ENCODE measurements at regions of chr12 and their contacts with region 1.

Region 1: DNA sequence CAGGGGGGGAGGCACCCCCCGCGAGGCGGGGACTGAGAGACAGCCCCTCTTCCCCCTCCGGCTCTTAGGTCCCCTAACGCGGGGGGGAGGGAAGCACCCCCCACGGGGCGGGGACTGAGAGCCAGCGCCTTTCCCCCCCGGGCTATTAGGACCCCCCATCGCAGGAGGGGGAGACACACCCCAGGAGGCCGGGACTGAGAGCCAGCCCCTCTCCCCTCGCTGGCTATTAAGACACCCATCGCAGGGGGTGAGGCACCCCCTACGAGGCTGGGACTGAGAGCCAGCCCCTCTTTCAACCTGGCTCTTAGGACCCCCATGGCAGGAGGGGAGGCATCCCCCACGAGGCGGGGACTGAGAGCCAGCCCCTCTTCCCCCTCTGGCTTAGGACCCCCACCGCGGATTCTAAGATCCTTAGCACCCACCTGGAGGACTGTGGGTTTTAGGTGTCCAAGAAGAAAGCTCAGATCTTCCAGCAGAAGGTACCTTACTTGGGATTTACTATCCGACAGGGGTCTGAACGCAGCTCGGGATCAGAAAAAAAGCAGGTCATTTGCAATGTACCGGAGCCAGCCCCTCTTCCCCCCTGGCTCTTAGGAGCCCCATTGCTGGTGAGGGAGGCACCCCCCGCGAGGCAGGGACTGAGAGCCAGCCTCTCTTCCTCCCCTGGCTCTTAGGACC is 197.8 kb upstream of the PZP start:
- DNase-seq: no peak
- H3K4me3 ChIP-seq: peak overlapping the region in 1 of 3 donors; percentile 59
- H3K27ac ChIP-seq: no peak overlapping the region
- H3K4me1 ChIP-seq: no peaks in the 10 kb centered on the region
- H3K27me3 ChIP-seq: no peaks in the 10 kb centered on the region
- CTCF ChIP-seq: no peak
- POLR2A ChIP-seq: no peak

Region 2: GRCh38 chr12:8145754-8146441 is 1260.1 kb before region 1 on chr12:
- intact Hi-C with region 1: loop called (anchors 10 kb)
- DNase-seq: no peak
- H3K4me3 ChIP-seq: peak overlapping the region in 2 of 3 donors; percentile 26 to 54
- H3K27ac ChIP-seq: peak overlapping the region in 1 of 2 donors; percentile 54
- H3K4me1 ChIP-seq: no peaks in the 10 kb centered on the region
- H3K27me3 ChIP-seq: no peaks in the 10 kb centered on the region
- CTCF ChIP-seq: no peak
- POLR2A ChIP-seq: no peak

Region 3: GRCh38 chr12:8890313-8891085 is 515.5 kb before region 1 on chr12:
- intact Hi-C with region 1: no loop called
- DNase-seq: no peak
- H3K4me3 ChIP-seq: peak overlapping the region; percentile 38 to 64 (median 52)
- H3K27ac ChIP-seq: no peak overlapping the region
- H3K4me1 ChIP-seq: no peaks in the 10 kb centered on the region
- H3K27me3 ChIP-seq: no peaks in the 10 kb centered on the region
- CTCF ChIP-seq: peak; percentile 80 to 87 (median 82)
- POLR2A ChIP-seq: no peak

Measured in breast epithelium (tissue), 4 donors.